ENCODE measurements at regions of chr1 and their contacts with region 1.

Region 1: DNA sequence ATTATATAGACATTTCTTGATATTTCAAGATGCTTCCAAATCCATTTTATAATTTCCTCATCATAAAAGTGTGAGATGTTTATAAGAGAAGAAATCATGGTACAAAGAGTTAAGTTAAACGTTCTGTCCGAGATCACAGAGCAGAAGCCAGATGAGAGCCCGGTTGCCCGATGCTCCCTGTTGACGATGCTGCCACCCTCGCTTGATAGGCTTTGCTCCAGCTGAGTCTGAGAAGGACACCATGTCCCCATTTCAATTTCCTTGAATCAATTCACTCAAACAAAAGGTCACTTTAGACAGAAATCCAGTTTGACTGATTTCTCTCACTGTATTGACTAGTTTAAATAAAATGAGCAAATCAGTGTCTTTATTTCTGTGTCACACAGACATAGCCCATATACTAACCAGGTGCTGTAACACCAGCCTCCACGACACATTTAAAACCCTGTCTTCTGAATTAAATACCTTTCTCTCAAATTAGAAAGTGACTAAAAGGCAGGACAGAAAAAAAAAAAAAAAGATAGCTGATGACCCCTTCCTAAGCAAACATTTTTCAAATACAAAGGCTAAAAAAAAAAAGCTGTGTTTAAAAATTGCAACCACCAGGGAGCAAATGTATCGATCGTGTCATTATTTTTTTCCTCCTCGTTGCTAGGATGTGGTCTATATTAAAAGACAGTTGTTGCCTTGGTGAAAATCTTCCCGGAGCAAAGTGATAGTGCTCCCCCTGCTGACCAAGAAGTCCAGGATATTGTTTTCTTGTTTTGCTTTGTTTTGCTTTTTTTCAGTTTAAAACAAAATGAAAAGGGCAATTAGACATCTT is 35.2 kb downstream of the DNASE2B start:
- DNase-seq: no peak
- H3K4me3 ChIP-seq: peak overlapping the region in 3 of 4 donors; percentile 15 to 30 (median 19)
- H3K27ac ChIP-seq: no peak overlapping the region
- H3K4me1 ChIP-seq: peaks cover 0 to 12% (median 0%) of the 10 kb centered on the region in 4 donors
- H3K27me3 ChIP-seq: no peaks in the 10 kb centered on the region
- CTCF ChIP-seq: peak; percentile 47 to 78 (median 64)
- EP300 ChIP-seq: no peak
- POLR2A ChIP-seq: no peak

Region 2: DNA sequence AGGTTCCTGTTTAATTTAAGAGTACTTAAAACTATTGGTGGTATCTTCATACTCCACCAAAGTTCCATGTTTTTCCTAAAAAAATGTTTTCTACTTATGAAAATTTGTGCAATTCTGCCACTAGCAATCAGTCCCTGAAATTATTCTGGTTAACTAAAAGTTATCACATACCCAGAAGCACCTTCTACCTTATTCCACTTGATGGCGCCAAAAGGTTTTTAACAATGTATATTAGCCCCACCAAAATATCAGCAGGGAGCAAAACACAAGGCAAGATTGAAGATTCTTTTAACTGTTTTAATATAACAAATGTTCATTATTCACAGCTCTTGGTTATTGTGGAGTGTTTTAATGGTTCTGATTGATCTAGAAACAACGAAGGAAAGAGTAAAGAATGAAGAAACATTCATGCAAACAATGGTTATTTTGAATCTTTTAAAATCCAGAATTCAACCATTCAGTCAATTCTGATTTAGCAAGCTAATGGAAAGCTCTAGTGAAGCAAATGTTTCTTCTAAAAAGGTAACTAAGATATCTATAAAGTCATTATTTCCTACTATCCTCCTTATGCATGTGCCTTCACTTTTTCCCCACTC is 501.7 kb before region 1 on chr1:
- intact Hi-C with region 1: loop called (anchors 2 kb)
- DNase-seq: no peak
- H3K4me3 ChIP-seq: no peak overlapping the region
- H3K27ac ChIP-seq: no peak overlapping the region
- H3K4me1 ChIP-seq: peaks cover 0 to 12% (median 0%) of the 10 kb centered on the region in 4 donors
- H3K27me3 ChIP-seq: no peaks in the 10 kb centered on the region
- CTCF ChIP-seq: peak; percentile 57 to 70 (median 62)
- EP300 ChIP-seq: no peak
- POLR2A ChIP-seq: no peak

Region 3: GRCh38 chr1:84077476-84078107 is 355.9 kb before region 1 on chr1:
- intact Hi-C with region 1: loop called (anchors 10 kb)
- DNase-seq: peak; percentile 78
- H3K4me3 ChIP-seq: peak overlapping the region; percentile 76 to 97 (median 95)
- H3K27ac ChIP-seq: peak overlapping the region; percentile 91 to 94 (median 93)
- H3K4me1 ChIP-seq: peaks cover 0 to 22% (median 17%) of the 10 kb centered on the region in 4 donors
- H3K27me3 ChIP-seq: no peaks in the 10 kb centered on the region
- CTCF ChIP-seq: no peak
- EP300 ChIP-seq: no peak
- POLR2A ChIP-seq: peak; percentile 9 to 32

Region 4: DNA sequence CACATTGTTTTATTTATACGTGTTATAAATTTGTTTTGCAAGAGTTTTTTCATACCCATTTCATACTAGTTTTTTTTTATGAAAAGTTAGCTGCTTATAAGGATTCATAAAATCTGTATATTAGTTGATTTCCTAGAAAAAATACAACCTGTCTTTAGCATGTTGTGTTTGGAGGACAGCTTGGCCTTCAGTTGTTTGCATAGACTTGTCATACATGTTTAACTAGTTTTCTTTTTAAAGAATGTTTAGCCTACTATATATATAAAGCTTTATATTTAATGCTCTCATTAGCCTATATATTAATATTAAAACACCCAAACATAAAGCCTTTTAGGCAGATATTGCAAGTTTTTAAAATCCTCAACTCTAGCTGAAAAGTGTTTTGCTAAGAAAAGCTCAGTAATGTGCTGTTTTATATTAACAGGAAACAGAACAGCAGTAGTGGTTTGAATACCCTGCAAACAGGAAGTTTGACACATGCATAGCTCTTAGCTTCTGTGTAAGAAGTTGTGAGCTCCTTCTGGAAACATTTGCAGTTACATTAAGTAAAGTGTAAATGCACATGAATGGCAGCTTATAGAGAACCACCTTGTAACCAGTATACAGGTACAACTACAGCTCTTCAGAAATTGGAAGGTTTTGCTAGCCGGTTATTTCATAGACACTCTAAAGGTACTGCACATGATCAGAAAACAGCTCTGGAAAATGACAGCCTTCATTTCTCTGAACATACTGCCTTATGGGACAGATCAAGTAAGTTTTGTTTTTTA is 289.5 kb before region 1 on chr1 and contains the start of gene PRKACB:
- intact Hi-C with region 1: loop called (anchors 5 kb)
- DNase-seq: no peak
- H3K4me3 ChIP-seq: no peak within 1 kb of the TSS
- H3K27ac ChIP-seq: peak within 1 kb of the TSS in 1 of 4 donors; percentile 12
- H3K4me1 ChIP-seq: no peaks in the 10 kb centered on the region
- H3K27me3 ChIP-seq: no peaks in the 10 kb centered on the region
- CTCF ChIP-seq: no peak
- EP300 ChIP-seq: no peak
- POLR2A ChIP-seq: no peak
- total RNA-seq, gene PRKACB: 48.3 to 58.7 (median 53.2) TPM

Region 5: DNA sequence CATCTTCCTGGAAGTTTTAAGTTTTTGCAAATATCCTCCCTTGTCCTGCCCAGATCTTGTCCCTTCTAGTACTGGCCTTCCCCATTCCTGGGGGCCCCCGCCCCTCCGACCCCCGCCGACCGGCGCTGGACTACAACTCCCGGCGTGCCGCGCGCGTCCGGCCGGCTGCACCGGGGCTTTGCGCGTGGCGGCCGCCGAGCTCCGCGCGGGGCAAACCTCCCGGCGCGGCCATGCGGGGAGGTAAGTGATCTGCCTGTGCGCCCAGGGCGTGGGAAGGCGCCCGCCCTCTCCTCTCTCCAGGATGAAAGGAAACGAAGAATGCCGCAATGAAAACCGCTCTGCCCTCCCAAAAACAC is 135.2 kb before region 1 on chr1:
- intact Hi-C with region 1: loop called (anchors 10 kb)
- DNase-seq: peak; percentile 70
- H3K4me3 ChIP-seq: peak overlapping the region; percentile 62 to 78 (median 74)
- H3K27ac ChIP-seq: peak overlapping the region; percentile 81 to 86 (median 82)
- H3K4me1 ChIP-seq: peaks cover 0 to 39% (median 26%) of the 10 kb centered on the region in 4 donors
- H3K27me3 ChIP-seq: no peaks in the 10 kb centered on the region
- CTCF ChIP-seq: no peak
- EP300 ChIP-seq: no peak
- POLR2A ChIP-seq: no peak

Measured in sigmoid colon (tissue), 7 donors.